ENCODE measurements at regions of chr20 and their contacts with region 1.

Region 1: DNA sequence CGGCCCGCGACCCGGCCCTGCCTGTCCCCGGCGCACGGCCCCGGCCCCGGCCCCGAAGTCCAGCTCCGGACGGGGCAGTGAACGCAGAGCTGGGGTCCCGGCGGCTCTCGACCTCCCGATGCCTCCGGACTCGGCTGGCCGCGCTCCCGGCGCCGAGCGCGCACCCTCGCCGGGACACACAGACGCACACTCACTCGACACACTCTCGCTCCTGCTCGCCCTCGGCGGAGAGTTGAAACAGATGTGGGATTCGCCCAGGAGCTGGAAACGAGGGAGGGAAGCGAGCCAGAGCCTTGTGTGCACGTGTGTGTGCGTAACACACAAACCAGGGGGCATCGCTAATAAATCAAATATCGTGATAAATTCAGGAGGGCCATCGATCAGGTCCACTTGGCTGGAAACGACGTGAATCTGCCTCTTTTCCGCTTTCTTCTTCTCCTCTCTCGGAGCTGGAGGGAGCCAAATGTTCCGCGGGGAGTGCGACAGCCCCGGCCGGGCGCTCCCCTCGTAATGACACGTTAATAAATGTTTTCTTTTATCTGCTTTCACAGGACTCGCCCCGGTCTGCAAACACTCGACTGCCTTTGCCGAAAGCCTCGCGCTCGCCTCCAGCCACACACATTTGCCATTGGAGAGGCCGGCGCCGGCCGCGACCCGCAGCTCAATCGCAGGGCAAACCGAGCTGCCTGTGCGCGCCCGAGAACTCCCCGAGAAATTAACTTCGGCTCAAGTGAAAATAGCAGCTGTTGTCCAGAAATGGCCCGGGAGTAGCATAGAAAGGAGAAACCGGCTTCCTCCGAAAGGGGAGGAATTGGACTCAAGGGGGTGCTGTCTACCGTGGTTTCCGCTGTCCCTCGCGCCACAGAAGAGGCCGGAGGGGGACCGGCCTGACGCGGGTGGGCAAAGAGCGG is 828 bp upstream of the SULF2 start:
- DNase-seq: peak; percentile 90

Region 2: DNA sequence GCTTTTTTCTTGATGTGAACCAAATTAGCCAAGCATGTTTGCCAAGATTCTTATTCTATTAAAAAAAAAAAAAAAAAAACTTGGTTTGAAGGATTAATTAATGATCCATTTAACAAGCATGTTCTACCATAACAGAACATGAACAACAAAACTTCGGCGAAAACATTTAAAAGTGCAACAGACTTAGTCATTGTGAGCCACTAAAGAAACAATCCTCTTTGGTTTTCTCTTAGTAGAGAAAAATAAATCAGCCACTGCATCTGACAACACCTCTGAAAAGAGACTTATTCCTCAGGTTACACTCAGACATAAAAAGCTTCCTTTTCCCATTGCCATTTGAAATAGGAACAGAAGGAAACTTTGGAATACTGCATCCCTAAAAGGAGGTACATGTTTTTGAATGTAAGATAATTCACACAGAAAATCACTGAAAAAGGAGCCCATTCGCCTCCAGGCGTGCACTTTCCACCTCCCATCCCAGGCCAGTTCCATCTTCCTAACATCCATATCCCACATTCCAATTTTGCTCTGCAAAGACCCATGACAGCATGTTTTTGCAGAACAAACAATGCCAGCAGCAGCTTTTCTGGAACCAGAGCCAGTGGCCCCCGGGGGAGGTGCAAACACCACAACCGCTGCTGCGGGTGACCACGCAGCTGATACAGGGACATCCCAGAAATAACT is 509.1 kb before region 1 on chr20:
- in situ Hi-C with region 1: no loop called
- DNase-seq: peak; percentile 47

Region 3: DNA sequence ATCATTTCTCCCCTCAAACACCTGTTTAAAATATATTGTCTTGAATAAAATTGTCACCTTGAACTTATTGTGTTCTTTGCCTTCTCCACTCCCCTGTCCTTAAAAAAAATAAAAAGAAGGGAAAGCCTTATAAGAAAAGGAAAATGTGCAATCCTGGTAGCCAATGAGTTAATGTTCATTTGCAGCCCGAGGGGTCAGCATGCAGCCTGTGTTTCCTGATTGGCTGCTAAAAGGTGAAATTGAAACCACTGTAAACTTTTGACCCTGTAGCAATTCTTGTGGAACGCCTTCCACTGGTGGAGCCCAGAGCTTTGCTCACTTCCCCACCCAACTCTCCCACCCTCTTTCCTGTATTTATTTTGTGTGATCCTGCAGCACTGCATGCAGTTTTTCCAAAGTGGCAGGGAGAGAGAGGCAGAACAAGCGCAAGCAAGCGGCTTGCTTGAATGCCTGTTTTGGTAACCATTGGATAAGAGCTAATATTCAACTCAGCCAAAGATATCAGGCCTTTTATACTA is 209.5 kb before region 1 on chr20:
- in situ Hi-C with region 1: no loop called
- DNase-seq: peak; percentile 97

Region 4: GRCh38 chr20:47677635-47678453 is 108.3 kb before region 1 on chr20:
- in situ Hi-C with region 1: loop called (anchors 10 kb)
- DNase-seq: peak; percentile 62

Region 5: GRCh38 chr20:48295445-48295963 is 509.4 kb after region 1 on chr20:
- in situ Hi-C with region 1: loop called (anchors 10 kb)
- DNase-seq: peak; percentile 99

Measured in Caki2 (cell line).